ENCODE measurements at regions of chr2 and their contacts with region 1.

Region 1: DNA sequence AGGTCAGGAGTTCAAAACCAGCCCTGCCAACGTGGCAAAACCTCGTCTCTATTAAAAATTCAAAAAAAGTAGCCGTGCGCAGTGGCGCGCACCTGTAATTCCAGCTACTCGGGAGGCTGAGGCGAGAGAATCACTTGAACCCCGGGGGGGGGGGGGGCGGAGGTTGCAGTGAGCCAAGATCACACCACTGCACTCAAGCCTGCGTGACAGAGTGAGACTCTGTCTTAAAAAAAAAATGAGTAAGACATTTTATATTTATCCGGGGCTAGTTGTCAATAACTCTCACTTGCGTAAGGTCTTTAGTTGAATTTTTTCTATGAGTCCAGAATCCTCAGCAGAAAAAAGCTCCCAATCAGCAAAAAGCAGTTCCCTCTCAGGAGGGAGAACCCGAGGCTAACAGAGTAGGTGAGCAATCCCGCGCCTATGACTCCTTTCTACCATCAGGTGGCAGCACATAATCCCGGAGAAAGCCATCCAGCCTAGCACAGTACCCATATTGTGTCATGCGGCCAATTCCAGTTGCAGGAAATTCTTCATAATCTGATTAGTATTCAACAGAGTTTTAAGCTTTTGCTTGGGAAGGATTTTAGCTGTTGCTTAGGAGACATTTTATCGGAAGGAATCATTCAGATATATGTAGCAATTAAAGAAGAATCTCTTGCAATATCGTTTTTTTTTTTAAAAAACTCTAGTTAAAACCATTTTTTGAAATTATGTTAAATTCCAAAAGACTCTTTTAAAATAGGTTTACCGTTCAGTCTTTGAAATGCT is 11.9 kb upstream of the CRYGA start:
- DNase-seq: peak; percentile 84
- H3K4me3 Mint-ChIP-seq: no peak overlapping the region
- H3K27ac Mint-ChIP-seq: no peak overlapping the region
- H3K4me1 Mint-ChIP-seq: no peaks in the 10 kb centered on the region
- H3K27me3 Mint-ChIP-seq: peaks cover 5% of the 10 kb centered on the region
- CTCF ChIP-seq: peak; percentile 73

Region 2: GRCh38 chr2:208142240-208142924 is 32.9 kb before region 1 on chr2:
- CTCF ChIA-PET with region 1: interaction called, 13 read pairs
- POLR2A ChIA-PET with region 1: no interaction called
- intact Hi-C with region 1: no loop called
- DNase-seq: peak; percentile 17
- H3K4me3 Mint-ChIP-seq: no peak overlapping the region
- H3K27ac Mint-ChIP-seq: no peak overlapping the region
- H3K4me1 Mint-ChIP-seq: peaks cover 7% of the 10 kb centered on the region
- H3K27me3 Mint-ChIP-seq: no peaks in the 10 kb centered on the region
- CTCF ChIP-seq: no peak

Region 3: GRCh38 chr2:208164951-208165755 is 10.1 kb before region 1 on chr2:
- CTCF ChIA-PET with region 1: interaction called, 37 read pairs
- POLR2A ChIA-PET with region 1: no interaction called
- intact Hi-C with region 1: no loop called
- DNase-seq: no peak
- H3K4me3 Mint-ChIP-seq: no peak overlapping the region
- H3K27ac Mint-ChIP-seq: no peak overlapping the region
- H3K4me1 Mint-ChIP-seq: no peaks in the 10 kb centered on the region
- H3K27me3 Mint-ChIP-seq: peaks cover 38% of the 10 kb centered on the region
- CTCF ChIP-seq: no peak

Region 4: GRCh38 chr2:208192612-208193236 is 17.5 kb after region 1 on chr2:
- CTCF ChIA-PET with region 1: interaction called, 25 read pairs
- POLR2A ChIA-PET with region 1: no interaction called
- intact Hi-C with region 1: no loop called
- DNase-seq: no peak
- H3K4me3 Mint-ChIP-seq: no peak overlapping the region
- H3K27ac Mint-ChIP-seq: no peak overlapping the region
- H3K4me1 Mint-ChIP-seq: no peaks in the 10 kb centered on the region
- H3K27me3 Mint-ChIP-seq: no peaks in the 10 kb centered on the region
- CTCF ChIP-seq: no peak

Region 5: DNA sequence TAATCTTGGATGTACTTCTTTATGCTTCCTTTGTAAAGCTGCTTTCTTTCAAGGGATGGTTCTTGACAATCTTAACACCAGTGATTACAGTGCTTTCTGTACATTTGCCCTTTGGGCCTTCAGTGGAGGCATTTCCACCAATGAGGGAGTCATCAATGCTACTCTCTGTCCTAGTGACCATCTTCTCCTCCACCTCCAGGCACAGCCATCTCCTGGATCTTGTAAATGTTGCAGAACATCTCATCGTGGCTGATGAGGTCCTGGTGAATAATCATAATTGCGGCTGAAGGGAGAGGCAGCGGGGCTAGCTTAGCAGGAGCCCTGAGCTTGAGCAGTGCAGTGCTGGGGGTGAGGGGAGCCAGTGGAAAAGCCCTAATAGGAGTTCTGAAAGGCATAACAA is 47.1 kb after region 1 on chr2:
- CTCF ChIA-PET with region 1: interaction called, 11 read pairs
- POLR2A ChIA-PET with region 1: no interaction called
- intact Hi-C with region 1: no loop called
- DNase-seq: peak; percentile 24
- H3K4me3 Mint-ChIP-seq: no peak overlapping the region
- H3K27ac Mint-ChIP-seq: no peak overlapping the region
- H3K4me1 Mint-ChIP-seq: peaks cover 13% of the 10 kb centered on the region
- H3K27me3 Mint-ChIP-seq: no peaks in the 10 kb centered on the region
- CTCF ChIP-seq: no peak

Region 6: DNA sequence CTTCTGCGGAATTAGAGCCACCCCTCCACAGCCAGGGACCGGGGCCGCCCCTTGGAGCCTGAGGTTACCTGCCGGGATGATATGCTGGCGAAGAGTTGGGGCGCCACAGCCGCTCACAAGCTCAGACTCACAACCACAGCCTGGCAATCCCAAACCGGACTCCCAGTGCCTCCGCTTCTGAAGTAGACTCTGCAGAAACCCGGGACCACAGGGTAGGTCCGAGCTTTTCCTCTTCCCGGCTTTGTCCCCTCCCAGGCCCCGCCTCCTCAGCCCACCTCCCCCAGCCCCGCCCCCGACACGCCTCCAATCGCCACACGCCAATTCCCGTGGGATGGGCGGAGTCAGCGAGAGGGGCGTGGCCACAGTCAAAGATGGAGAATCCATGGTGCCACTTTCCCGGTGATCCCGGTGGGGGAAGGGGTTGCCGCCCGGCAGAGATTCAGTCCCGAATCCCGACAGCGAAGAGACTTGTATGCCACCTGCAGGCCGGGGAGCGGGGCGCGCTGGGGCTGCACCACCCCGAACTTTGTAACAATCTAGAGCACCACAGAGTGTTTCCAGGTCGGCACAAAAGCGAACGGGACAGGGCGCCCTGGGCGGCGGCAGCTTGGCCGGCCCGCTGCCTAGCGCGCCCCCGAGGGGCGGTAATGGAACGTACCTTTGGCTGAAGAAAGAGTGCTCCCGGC is 79.8 kb after region 1 on chr2 and contains the start of gene IDH1:
- CTCF ChIA-PET with region 1: interaction called, 104 read pairs
- POLR2A ChIA-PET with region 1: interaction called, 32 read pairs
- intact Hi-C with region 1: loop called (anchors 1 kb)
- DNase-seq: peak; percentile 97
- H3K4me3 Mint-ChIP-seq: peak within 1 kb of the TSS; percentile 83
- H3K27ac Mint-ChIP-seq: peak within 1 kb of the TSS; percentile 59
- H3K4me1 Mint-ChIP-seq: peaks cover 20% of the 10 kb centered on the region
- H3K27me3 Mint-ChIP-seq: no peaks in the 10 kb centered on the region
- CTCF ChIP-seq: peak; percentile 55
- total RNA-seq, gene IDH1: 50.2 and 122 TPM in 2 replicates

Measured in MCF 10A (cell line).